ENCODE measurements at regions of chr11 and their contacts with region 1.

Region 1: GRCh38 chr11:74492974-74493790 is at the start of gene LIPT2:
- DNase-seq: peak; percentile 92 to 99 (median 92)
- ATAC-seq: peak; percentile 100
- H3K4me3 ChIP-seq: peak within 1 kb of the TSS; percentile 92
- H3K27ac ChIP-seq: peak within 1 kb of the TSS; percentile 89
- H3K4me1 ChIP-seq: peaks cover 15 to 18% of the 10 kb centered on the region in 2 experiments; a peak in 4 of 5 replicates
- H3K27me3 ChIP-seq: no peaks in the 10 kb centered on the region
- CTCF ChIP-seq: no peak
- EP300 ChIP-seq: no peak
- POLR2A ChIP-seq: peak; percentile 82
- RAD21 ChIP-seq: no peak
- polyA plus RNA-seq, gene LIPT2: 1.00 to 1.4 TPM

Region 2: DNA sequence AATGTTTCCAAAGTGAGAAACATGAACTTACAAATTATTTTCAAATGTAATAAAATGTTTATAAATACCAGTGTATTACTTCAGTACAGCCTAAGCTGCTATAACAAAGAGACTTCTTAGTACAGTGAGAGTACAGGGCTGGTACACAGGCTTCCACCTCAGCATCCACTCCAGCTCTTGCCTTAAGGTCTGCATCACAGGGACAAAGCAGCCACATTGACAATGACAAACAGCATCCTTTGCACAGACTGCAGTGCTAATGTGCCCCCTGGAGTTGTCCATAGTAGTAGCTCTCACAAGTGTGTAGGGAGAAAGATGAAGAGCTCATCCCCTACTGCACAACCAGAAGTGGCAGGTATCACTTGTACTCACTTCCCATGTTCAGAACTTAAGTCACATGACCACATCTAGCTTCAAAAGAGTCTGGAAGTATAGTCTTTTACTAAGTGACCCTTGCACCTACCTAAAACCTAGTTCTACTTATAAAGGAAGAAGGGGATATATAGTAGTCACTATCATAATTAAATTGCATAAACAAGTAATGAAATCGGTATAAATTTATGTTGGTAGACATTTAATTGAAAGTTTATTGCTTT is 11.0 kb after region 1 on chr11:
- CTCF ChIA-PET with region 1: no interaction called
- POLR2A ChIA-PET with region 1: interaction called, 13 read pairs
- in situ Hi-C with region 1: no loop called
- intact Hi-C with region 1: no loop called
- DNase-seq: no peak
- ATAC-seq: peak; percentile 36
- H3K4me3 ChIP-seq: no peak overlapping the region
- H3K27ac ChIP-seq: peak overlapping the region; percentile 81; the same call in 1 of the 3 replicates
- H3K4me1 ChIP-seq: peaks cover 5 to 12% of the 10 kb centered on the region in 2 experiments; a peak in 3 of 5 replicates
- H3K27me3 ChIP-seq: no peaks in the 10 kb centered on the region
- CTCF ChIP-seq: peak in 1 of 3 experiments; percentile 18; a peak in 2 of 6 replicates
- EP300 ChIP-seq: no peak
- POLR2A ChIP-seq: no peak
- RAD21 ChIP-seq: peak in 1 of 2 experiments; percentile 33; a peak in 2 of 4 replicates

Region 3: GRCh38 chr11:74636633-74637184 is 143.5 kb after region 1 on chr11:
- CTCF ChIA-PET with region 1: no interaction called
- POLR2A ChIA-PET with region 1: no interaction called
- in situ Hi-C with region 1: no loop called
- intact Hi-C with region 1: no loop called
- DNase-seq: peak in 3 of 4 experiments; percentile 18 to 23 (median 21)
- ATAC-seq: no peak
- H3K4me3 ChIP-seq: no peak overlapping the region
- H3K27ac ChIP-seq: 0 out of 3 replicates have a peak overlapping the region, but pooled peaks have one; percentile 10
- H3K4me1 ChIP-seq: peaks cover 0 to 35% of the 10 kb centered on the region in 2 experiments
- H3K27me3 ChIP-seq: no peaks in the 10 kb centered on the region
- CTCF ChIP-seq: no peak
- EP300 ChIP-seq: no peak
- POLR2A ChIP-seq: no peak
- RAD21 ChIP-seq: no peak

Measured in K562 (cell line).